B cell (primary cell): ENCODE measurements at regions of chr15 and their contacts with region 1.

Region 1: GRCh38 chr15:63157118-63157843 is at the start of gene RPS27L:
- DNase-seq: peak; percentile 90
- ATAC-seq: peak; percentile 96
- H3K4me3 ChIP-seq: peak within 1 kb of the TSS; percentile 83 to 95 (median 88)
- H3K4me3 Mint-ChIP-seq: peak within 1 kb of the TSS; percentile 96
- H3K27ac ChIP-seq: peak within 1 kb of the TSS; percentile 68 to 81
- H3K27ac Mint-ChIP-seq: peak within 1 kb of the TSS; percentile 99
- H3K4me1 ChIP-seq: peaks cover 14 to 17% of the 10 kb centered on the region in 2 donors
- H3K4me1 Mint-ChIP-seq: peaks cover 28% of the 10 kb centered on the region
- H3K27me3 ChIP-seq: no peaks in the 10 kb centered on the region
- H3K27me3 Mint-ChIP-seq: no peaks in the 10 kb centered on the region
- CTCF ChIP-seq: no peak
- total RNA-seq, gene RPS27L: 49.4 and 50.9 TPM in 2 replicates

Region 2: GRCh38 chr15:63246691-63247464 is 89.6 kb after region 1 on chr15:
- CTCF ChIA-PET with region 1: no interaction called
- POLR2A ChIA-PET with region 1: no interaction called
- intact Hi-C with region 1: loop called (anchors 5 kb)
- DNase-seq: no peak
- ATAC-seq: no peak
- H3K4me3 ChIP-seq: no peak overlapping the region
- H3K4me3 Mint-ChIP-seq: no peak overlapping the region
- H3K27ac ChIP-seq: peak overlapping the region in 1 of 2 donors; percentile 12
- H3K27ac Mint-ChIP-seq: no peak overlapping the region
- H3K4me1 ChIP-seq: peaks cover 5 to 11% of the 10 kb centered on the region in 2 donors
- H3K4me1 Mint-ChIP-seq: peaks cover 25% of the 10 kb centered on the region
- H3K27me3 ChIP-seq: no peaks in the 10 kb centered on the region
- H3K27me3 Mint-ChIP-seq: no peaks in the 10 kb centered on the region
- CTCF ChIP-seq: no peak